HEK293T (cell line): ENCODE measurements at regions of chr15 and their contacts with region 1.

Region 1: DNA sequence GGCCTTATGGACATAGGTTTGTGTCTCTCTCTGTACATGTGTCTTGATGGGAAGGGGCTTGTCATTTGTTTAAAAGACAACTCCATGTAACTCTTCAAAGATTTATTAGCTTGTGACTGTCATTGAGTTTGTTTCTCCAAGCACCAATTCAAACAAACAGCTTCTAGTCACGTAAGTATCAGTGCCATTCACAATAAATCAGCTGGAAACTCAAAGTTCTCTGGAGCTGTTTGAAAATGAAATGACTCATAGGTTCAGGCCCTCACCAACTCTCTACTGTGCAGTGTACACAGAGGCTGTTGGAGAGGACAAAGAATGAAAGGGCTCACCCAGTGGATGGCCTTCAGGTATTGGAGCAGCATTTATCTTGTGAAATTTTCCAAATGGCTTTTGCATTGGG is 476.3 kb downstream of the AGBL1 start:
- DNase-seq: peak; percentile 11

Region 2: DNA sequence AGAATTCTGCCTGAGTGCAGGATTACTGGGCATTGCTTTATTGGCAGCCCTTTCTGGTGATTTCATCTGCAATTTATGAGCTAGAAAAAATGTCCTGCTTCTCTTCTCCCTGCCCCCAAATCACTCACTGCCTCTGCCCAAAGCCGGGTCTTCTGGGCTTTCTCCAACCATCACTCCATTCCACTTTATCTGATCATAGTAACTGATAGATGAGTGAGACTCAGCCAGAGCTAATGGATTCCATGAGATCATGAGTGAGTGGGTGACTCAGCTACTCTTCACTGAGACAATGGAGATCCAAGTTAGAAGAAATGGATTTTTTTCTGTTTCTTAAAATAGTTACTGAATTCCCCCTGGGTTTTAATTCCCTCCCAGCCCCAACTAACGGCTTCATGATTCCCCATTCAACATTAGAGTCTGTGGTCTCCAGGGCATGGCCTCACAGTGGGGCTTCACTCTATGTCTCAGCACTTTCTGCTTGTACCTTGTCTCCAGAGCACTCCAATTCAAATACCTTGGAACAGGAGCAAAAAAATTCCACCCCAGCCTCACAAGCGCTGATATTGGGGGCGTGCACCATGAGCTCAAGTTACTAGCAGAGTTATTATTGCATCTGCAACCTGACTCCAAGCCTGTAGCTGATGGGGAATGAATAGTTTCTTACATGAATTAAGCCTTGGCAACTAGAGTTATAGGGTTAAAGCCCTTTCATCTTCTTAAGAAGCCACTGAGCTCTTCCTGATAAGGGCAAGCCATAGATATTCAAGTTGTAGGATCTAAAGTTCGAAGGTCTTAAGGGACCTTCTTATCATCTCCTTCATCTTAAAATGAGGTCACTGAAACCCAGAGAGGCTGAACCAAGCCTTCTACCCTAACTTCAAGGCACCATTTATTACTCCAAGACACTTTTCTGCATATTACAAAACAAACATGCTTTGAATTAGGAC is 390.4 kb before region 1 on chr15:
- CTCF ChIA-PET with region 1: no interaction called
- POLR2A ChIA-PET with region 1: interaction called, 10 read pairs
- DNase-seq: no peak

Region 3: DNA sequence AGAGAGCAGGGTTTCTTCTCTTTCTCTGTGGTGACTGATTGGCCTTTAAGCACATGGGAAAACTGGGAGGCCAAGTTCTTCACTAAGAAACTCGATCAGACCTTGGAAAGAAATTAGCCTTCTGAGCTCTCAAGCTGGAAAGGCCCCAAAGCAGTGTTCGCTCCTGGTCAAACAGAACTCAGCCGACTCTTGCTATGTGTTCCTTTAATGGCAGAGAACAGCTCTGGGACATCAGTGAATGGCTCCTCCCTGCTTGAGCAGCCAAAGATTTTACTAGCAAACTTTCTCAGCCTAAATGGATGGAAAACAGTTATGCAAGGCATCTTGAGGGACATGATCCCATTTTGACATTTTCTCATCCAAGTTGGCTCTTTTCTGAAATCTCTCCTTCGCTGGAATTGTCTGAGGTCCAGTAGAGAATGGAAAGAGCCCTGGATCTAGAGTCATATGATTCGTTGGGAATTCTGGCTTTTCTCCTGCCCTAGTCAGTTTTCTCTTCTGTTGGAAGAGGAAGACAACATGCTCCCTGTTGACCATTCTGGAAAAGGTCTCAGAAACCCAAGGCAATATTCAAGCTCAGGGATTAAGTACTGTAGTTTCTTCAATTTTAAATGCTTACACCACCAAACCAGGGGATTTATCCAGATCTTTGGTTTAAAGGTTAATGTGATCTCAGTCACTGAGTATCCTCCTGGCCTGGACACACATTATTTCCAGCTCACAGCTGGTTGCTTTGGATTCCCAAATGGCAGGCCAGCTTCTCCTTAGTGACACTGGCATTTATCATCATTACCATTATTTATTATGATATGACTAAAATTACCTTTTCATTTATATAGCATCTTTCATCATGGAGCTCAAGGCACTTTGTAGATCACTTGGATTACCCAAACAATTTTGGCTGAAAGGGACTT is 156.6 kb before region 1 on chr15:
- CTCF ChIA-PET with region 1: no interaction called
- POLR2A ChIA-PET with region 1: no interaction called
- DNase-seq: no peak

Region 4: DNA sequence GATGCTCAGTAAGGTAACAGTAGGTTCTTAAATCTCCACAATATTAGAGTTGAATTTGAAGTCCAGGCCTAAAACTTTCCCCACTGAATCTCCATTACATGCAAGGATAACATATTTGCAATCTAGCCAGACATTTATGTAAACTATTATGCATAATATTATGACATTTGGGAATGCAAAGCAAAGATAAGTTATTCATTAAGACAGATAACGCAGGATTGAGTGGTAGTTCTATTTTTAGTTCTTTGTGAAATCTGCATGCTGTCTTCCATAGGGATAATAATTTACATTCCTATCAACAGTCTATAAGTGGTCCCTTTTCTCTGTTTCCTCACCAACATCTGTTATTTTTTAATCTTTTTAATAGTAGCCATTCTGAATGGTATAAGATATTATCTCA is 142.7 kb before region 1 on chr15:
- CTCF ChIA-PET with region 1: no interaction called
- POLR2A ChIA-PET with region 1: no interaction called
- DNase-seq: no peak